Endothelial cell of umbilical vein (primary cell): ENCODE measurements at regions of chr5 and their contacts with region 1.

Region 1: DNA sequence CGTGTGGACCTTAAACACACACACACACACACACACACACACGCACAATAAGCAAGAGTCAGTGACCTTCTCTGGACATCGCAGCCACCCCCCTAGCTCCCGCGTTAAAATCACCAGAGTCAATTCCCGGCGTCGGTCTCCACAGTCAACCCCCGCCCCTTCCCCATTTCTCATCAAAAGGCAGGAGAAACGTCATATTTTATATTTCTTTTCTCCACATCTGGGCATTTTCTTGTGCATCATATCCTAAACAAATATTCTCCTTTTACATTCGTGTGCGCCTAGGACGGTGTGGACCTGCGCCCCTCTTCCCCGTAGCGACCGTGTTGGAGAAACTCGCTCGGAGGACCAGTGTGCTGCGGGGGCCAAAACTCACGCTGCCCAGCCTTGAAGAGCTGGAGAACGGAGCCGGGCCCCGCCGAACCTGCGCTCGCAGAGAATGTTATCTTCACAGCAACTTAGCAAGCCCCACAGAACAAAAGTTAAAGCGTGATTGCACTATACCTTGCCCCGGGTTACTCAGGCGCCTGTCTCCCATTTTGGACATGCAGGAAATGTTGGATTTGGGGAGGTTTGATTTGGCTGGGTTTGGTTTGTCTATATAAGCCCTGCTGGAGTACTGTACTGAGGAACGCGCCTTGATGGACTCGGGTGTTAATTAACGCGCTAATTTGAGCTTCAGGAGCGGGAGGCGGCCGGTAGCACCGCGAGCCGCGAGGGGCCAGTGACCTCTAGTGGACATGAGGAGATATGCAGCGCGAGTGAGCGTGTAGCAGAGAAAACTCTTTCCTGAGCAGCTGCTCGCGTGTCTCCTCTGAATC is 192.4 kb downstream of the MEF2C start:
- DNase-seq: peak; percentile 72
- H3K4me3 ChIP-seq: peak overlapping the region in 1 of 3 experiments; percentile 3
- H3K27ac ChIP-seq: no peak overlapping the region
- H3K4me1 ChIP-seq: peaks cover 7% of the 10 kb centered on the region
- H3K27me3 ChIP-seq: peaks cover 91 to 98% of the 10 kb centered on the region in 2 experiments
- CTCF ChIP-seq: peak; percentile 88 to 96
- POLR2A ChIP-seq: no peak

Region 2: DNA sequence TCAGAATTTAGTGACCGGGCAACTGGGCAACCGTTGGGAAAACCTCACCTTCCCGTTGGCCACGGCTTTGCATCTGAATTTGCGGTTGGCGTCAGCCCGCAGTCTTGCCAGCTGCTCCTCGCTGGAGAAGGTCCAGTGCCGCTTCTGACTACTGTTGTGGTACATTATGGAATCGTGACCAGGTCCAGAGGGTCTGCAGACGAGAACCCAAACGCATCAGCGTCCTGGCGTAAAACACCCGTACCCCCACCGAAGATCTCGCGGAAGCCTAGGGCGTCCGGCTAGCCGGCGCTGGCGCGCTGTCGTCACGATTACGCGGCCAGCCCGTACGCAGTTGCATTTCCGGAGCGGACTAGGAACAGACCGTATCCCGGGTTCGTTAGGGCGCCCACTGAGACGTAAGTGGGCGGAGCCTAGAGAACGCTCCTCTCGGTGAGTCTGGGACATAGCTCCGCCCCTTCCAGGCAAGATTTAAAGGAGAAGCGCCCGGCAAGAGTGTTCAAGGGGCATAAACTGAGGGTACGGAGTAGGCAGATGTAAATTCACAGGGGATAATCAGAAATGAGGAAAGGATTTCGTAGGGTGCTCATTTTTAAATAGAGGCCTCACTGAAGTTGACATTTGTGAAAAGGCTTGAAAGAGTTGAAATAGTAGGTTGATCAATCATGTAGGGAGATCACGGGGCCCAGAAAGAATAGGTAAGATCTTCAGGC is 1277.8 kb before region 1 on chr5 and contains the start of gene CCNH:
- CTCF ChIA-PET with region 1: interaction called, 10 read pairs
- POLR2A ChIA-PET with region 1: no interaction called
- dilution Hi-C with region 1: no loop called
- intact Hi-C with region 1: no loop called
- DNase-seq: peak; percentile 98
- H3K4me3 ChIP-seq: peak within 1 kb of the TSS; percentile 71 to 96 (median 94)
- H3K27ac ChIP-seq: peak within 1 kb of the TSS; percentile 97
- H3K4me1 ChIP-seq: peaks cover 18% of the 10 kb centered on the region
- H3K27me3 ChIP-seq: no peaks in the 10 kb centered on the region
- CTCF ChIP-seq: no peak
- POLR2A ChIP-seq: peak; percentile 89
- total RNA-seq, gene CCNH: 50.6 and 54.1 TPM in 2 replicates

Region 3: DNA sequence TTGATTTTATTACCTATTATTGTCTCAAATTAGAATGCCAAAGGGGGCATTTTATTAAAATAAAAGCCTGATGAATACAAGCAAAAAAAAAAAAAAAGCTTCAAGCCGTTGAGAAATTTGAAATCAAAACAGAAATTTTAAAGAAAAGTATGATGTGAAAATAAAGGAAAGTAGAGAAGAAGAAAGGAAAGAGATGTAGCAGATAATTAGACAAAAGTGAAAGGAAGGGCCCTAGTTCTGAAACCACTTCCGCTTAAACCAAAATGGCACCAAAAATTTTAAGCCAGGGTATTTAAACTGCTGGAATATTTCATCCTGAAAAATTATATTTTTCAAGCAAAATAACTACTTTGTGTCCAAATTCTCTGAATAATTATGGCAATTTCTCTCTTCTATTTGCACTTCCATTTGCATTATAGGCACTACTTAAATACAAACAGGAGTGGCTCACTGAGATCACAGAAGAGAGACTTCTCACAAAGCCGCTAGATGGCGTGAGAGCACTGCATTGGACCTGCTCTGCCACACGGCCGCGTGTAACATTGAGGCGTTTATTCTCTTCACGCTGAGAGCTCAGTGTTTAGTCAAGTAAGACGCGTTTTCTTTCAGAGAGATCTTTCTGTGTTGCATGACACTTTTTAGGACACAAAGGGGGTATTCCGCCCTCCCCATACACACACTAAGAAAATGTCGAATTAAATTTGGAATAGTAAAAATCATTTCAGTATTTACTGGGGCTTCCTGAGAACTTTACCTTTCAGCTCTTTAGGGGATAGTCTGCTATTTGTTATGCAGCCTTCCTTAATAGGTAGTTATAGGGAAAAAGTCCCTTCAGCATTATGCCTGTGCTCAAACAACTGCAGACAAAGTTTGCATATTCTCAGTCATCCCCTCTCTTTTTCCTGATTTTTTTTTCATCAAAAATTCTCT is 909.5 kb before region 1 on chr5:
- CTCF ChIA-PET with region 1: interaction called, 255 read pairs
- POLR2A ChIA-PET with region 1: no interaction called
- dilution Hi-C with region 1: no loop called
- intact Hi-C with region 1: loop called (anchors 1 kb)
- DNase-seq: peak; percentile 74
- H3K4me3 ChIP-seq: no peak overlapping the region
- H3K27ac ChIP-seq: no peak overlapping the region
- H3K4me1 ChIP-seq: no peaks in the 10 kb centered on the region
- H3K27me3 ChIP-seq: peaks cover 0 to 20% of the 10 kb centered on the region in 2 experiments
- CTCF ChIP-seq: peak; percentile 80 to 82
- POLR2A ChIP-seq: no peak

Region 4: GRCh38 chr5:88140856-88141752 is 549.5 kb before region 1 on chr5:
- CTCF ChIA-PET with region 1: interaction called, 10 read pairs
- POLR2A ChIA-PET with region 1: no interaction called
- dilution Hi-C with region 1: loop called (anchors 25 kb)
- intact Hi-C with region 1: loop called (anchors 1 kb)
- DNase-seq: peak; percentile 96
- H3K4me3 ChIP-seq: peak overlapping the region; percentile 31 to 75 (median 38)
- H3K27ac ChIP-seq: no peak overlapping the region
- H3K4me1 ChIP-seq: peaks cover 12% of the 10 kb centered on the region
- H3K27me3 ChIP-seq: peaks cover 58 to 78% of the 10 kb centered on the region in 2 experiments
- CTCF ChIP-seq: peak; percentile 55 to 82
- POLR2A ChIP-seq: no peak

Region 5: GRCh38 chr5:88666761-88667495 is 23.7 kb before region 1 on chr5:
- CTCF ChIA-PET with region 1: interaction called, 12 read pairs
- POLR2A ChIA-PET with region 1: no interaction called
- dilution Hi-C with region 1: no loop called
- intact Hi-C with region 1: no loop called
- DNase-seq: peak; percentile 39
- H3K4me3 ChIP-seq: peak overlapping the region in 1 of 3 experiments; percentile 40
- H3K27ac ChIP-seq: no peak overlapping the region
- H3K4me1 ChIP-seq: peaks cover 6% of the 10 kb centered on the region
- H3K27me3 ChIP-seq: peaks cover 71 to 100% of the 10 kb centered on the region in 2 experiments
- CTCF ChIP-seq: no peak
- POLR2A ChIP-seq: no peak

Region 6: DNA sequence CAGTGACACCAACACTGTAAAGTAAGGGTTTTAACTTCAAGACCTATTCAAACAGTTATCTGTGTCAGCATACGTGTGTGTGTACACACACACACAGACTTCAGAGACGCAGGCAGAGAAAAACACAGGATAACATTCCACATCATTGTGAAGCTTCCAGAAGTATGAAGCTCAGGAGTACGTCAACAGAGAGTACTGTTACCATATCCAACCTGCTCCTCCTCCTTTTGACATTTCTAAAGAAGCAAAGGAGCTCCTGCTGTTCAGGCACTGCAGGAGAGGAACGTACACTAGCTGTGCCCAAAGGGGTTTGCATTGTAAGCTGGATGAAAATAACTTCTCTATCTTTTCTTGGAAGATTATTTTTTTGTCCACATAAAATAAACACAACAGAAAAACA is 11.7 kb after region 1 on chr5:
- CTCF ChIA-PET with region 1: interaction called, 12 read pairs
- POLR2A ChIA-PET with region 1: no interaction called
- dilution Hi-C with region 1: no loop called
- intact Hi-C with region 1: no loop called
- DNase-seq: no peak
- H3K4me3 ChIP-seq: no peak overlapping the region
- H3K27ac ChIP-seq: no peak overlapping the region
- H3K4me1 ChIP-seq: no peaks in the 10 kb centered on the region
- H3K27me3 ChIP-seq: peaks cover 19 to 55% of the 10 kb centered on the region in 2 experiments
- CTCF ChIP-seq: no peak
- POLR2A ChIP-seq: no peak

Region 7: GRCh38 chr5:88724201-88724600 is 33.6 kb after region 1 on chr5:
- CTCF ChIA-PET with region 1: interaction called, 15 read pairs
- POLR2A ChIA-PET with region 1: no interaction called
- dilution Hi-C with region 1: no loop called
- intact Hi-C with region 1: no loop called
- DNase-seq: peak; percentile 32
- H3K4me3 ChIP-seq: no peak overlapping the region
- H3K27ac ChIP-seq: no peak overlapping the region
- H3K4me1 ChIP-seq: no peaks in the 10 kb centered on the region
- H3K27me3 ChIP-seq: no peaks in the 10 kb centered on the region
- CTCF ChIP-seq: no peak
- POLR2A ChIP-seq: no peak